PC-9 (cell line): ENCODE measurements at regions of chr1 and their contacts with region 1.

Region 1: GRCh38 chr1:13759088-13759487 is 59.1 kb downstream of the PRDM2 start:
- DNase-seq: peak; percentile 44 to 89
- H3K4me3 ChIP-seq: peak overlapping the region; percentile 49; the same call in 1 of the 2 replicates
- H3K27ac ChIP-seq: peak overlapping the region; percentile 94
- H3K4me1 ChIP-seq: peaks cover 50% of the 10 kb centered on the region
- H3K27me3 ChIP-seq: no peaks in the 10 kb centered on the region
- CTCF ChIP-seq: no peak

Region 2: DNA sequence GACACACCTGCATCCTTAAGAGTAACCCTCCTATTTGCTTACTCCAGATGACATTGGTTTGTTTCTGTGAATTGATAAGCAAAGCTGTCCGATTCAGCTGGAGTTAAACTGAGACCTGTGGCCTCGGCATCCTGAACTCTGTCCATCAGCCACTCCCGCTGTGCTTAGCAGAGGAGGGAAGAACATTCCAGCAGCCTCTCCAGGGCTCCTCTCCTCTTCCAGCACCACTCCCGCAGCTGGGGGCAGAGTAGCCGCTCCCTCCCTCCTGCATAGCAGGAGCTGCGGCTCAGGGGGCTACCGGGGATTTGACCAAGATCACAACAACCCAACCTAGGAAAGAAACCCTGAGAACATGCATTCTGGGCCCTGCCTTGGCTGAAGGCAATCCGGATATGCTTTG is 254.1 kb before region 1 on chr1:
- CTCF ChIA-PET with region 1: no interaction called
- POLR2A ChIA-PET with region 1: no interaction called
- intact Hi-C with region 1: no loop called
- DNase-seq: no peak
- H3K4me3 ChIP-seq: no peak overlapping the region
- H3K27ac ChIP-seq: no peak overlapping the region
- H3K4me1 ChIP-seq: no peaks in the 10 kb centered on the region
- H3K27me3 ChIP-seq: peaks cover 61% of the 10 kb centered on the region
- CTCF ChIP-seq: no peak

Region 3: GRCh38 chr1:13775459-13775858 is 16.4 kb after region 1 on chr1:
- CTCF ChIA-PET with region 1: no interaction called
- POLR2A ChIA-PET with region 1: interaction called, 11 read pairs
- intact Hi-C with region 1: no loop called
- DNase-seq: no peak
- H3K4me3 ChIP-seq: no peak overlapping the region
- H3K27ac ChIP-seq: no peak overlapping the region
- H3K4me1 ChIP-seq: no peaks in the 10 kb centered on the region
- H3K27me3 ChIP-seq: no peaks in the 10 kb centered on the region
- CTCF ChIP-seq: no peak

Region 4: DNA sequence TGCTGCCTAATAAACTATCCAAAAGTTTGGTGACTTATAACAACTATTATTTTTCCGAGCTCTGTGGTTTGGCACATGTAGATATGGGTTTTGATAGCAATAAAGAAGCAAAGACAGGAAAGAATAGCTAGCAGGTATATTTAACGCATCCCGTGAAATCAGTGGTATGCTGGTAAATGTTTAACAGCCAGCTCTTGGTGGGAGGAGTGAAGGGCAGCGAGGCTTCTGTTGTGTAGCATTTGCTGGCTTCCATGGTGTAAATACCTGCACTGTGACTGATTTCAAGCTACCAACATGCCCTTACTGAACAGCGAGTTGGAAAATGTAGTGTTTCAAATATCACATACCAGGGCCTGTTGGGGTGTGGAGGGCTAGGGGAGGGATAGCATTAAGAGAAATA is 231.9 kb after region 1 on chr1:
- CTCF ChIA-PET with region 1: no interaction called
- POLR2A ChIA-PET with region 1: no interaction called
- intact Hi-C with region 1: no loop called
- DNase-seq: no peak
- H3K4me3 ChIP-seq: no peak overlapping the region
- H3K27ac ChIP-seq: no peak overlapping the region
- H3K4me1 ChIP-seq: no peaks in the 10 kb centered on the region
- H3K27me3 ChIP-seq: no peaks in the 10 kb centered on the region
- CTCF ChIP-seq: no peak